Sigmoid colon (tissue), 7 donors: ENCODE measurements at regions of chr9 and their contacts with region 1.

Region 1: DNA sequence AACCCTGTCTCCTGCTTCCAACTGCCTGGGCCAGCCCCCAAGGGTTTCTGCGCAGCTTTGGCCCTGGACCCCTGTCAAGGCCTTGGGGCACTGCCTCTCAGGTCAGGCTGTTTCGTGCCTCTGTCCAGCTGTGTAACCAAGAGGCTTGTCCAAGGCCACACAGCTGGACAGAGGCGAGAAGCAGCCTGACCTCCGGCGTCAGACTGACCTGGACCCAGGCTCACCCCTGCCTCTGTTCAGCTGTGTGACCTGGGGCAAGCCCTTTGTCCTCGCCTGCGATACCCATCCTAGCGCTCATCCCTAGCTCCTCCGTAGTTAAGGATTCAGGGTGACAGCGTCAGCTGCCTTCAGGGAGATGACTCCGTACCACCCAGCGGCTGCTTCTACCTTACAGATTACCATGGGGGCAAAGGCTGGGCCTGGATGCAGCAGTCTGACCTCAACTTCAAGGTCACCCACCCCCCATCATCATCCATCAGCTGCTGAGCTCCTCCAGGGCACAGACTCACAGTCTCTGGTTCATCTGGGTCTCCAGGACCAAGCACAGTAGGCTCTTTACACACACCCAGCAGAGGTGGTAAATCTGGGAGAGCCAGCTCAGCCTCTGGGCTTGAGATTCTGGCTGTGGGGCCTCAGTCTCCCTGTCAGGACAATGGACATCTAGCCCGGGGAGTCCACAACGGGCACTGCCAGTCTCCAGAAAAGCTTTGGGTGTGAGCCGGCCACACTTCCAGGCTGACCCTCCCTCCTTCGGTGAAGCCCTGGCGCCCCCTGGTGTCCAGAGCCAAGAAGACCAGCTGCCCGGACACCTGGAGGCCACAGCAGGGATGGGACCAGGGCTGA is 7.9 kb downstream of the AK1 start:
- DNase-seq: peak; percentile 95
- H3K4me3 ChIP-seq: no peak overlapping the region
- H3K27ac ChIP-seq: peak overlapping the region in 1 of 4 donors; percentile 37
- H3K4me1 ChIP-seq: peaks cover 0 to 17% (median 16%) of the 10 kb centered on the region in 4 donors
- H3K27me3 ChIP-seq: no peaks in the 10 kb centered on the region
- CTCF ChIP-seq: peak; percentile 74 to 90 (median 84)
- EP300 ChIP-seq: no peak
- POLR2A ChIP-seq: no peak

Region 2: GRCh38 chr9:127802576-127803443 is 66.7 kb before region 1 on chr9 and contains the start of gene FPGS:
- intact Hi-C with region 1: loop called (anchors 5 kb)
- DNase-seq: peak; percentile 96
- H3K4me3 ChIP-seq: peak within 1 kb of the TSS; percentile 50 to 81 (median 70)
- H3K27ac ChIP-seq: peak within 1 kb of the TSS; percentile 88 to 95 (median 92)
- H3K4me1 ChIP-seq: peaks cover 0 to 27% (median 24%) of the 10 kb centered on the region in 4 donors
- H3K27me3 ChIP-seq: no peaks in the 10 kb centered on the region
- CTCF ChIP-seq: no peak
- EP300 ChIP-seq: no peak
- POLR2A ChIP-seq: peak; percentile 48 to 50
- total RNA-seq, gene FPGS: 32.1 to 47.9 (median 35.8) TPM

Region 3: GRCh38 chr9:128094166-128094967 is 224.8 kb after region 1 on chr9:
- intact Hi-C with region 1: no loop called
- DNase-seq: peak; percentile 98
- H3K4me3 ChIP-seq: peak overlapping the region; percentile 10 to 29 (median 24)
- H3K27ac ChIP-seq: peak overlapping the region; percentile 91 to 98 (median 92)
- H3K4me1 ChIP-seq: peaks cover 0 to 74% (median 69%) of the 10 kb centered on the region in 4 donors
- H3K27me3 ChIP-seq: no peaks in the 10 kb centered on the region
- CTCF ChIP-seq: no peak
- EP300 ChIP-seq: peak in 3 of 4 donors; percentile 25 to 58 (median 51)
- POLR2A ChIP-seq: peak in 1 of 2 donors; percentile 22